ENCODE measurements at regions of chr5 and their contacts with region 1.

Region 1: GRCh38 chr5:179858586-179859427 is at the start of gene MRNIP:
- DNase-seq: peak; percentile 98
- H3K4me3 Mint-ChIP-seq: peak within 1 kb of the TSS; percentile 94
- H3K27ac Mint-ChIP-seq: peak within 1 kb of the TSS; percentile 83
- H3K4me1 Mint-ChIP-seq: peaks cover 11% of the 10 kb centered on the region
- H3K27me3 Mint-ChIP-seq: no peaks in the 10 kb centered on the region
- CTCF ChIP-seq: no peak
- total RNA-seq, gene MRNIP: 40.3 and 42.8 TPM in 2 replicates

Region 2: DNA sequence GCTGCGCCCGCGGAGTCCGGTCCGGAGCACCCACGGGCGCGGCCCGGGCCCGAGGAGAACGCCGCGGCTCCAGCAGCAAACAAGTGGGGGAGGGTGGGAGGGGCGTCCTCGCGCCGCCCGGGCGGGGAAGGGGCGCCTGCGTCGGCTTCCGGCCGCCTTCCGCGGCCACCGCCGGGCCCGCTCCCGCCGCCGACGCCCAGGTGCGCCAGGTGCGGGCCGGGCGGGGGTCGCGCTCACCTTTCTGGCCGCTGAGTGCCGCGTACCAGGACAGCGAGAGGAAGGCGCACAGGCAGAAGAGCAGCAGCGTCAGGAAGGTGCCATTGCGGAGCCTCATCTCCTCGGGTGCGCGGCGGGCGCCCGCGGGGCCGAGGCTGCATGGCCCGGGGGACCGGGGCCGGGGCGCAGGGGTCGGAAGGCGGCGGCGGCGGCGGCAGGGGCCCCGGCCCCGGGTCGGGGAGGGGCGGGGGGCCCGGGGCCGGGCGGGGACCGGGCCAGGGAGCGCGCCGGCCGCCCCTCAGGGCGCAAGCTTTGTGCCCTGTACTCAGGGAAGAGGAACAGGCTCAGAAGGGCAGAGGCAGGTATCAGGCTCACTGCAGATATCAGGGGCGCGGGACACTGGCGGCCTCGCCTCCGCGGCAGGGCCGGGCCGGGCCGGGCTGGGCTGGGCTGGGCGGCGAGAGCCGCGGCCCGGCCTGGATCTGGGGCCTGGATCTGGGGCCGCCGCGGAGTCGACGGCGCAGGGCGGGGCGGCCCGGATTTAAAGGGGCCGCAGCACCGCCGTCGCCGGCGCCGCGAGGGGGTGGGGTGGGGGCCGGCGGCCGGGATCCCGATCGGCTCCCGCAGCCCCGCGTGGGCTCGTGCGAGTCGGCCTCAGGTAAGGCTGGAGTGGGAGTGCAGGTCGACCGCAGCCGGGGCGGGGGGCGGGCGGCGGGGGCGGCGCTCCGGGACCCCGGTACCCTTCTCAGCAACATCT is 52.3 kb before region 1 on chr5 and contains the start of gene MGAT4B:
- CTCF ChIA-PET with region 1: no interaction called
- POLR2A ChIA-PET with region 1: interaction called, 8 read pairs
- intact Hi-C with region 1: loop called (anchors 5 kb)
- DNase-seq: peak; percentile 87
- H3K4me3 Mint-ChIP-seq: peak within 1 kb of the TSS; percentile 82
- H3K27ac Mint-ChIP-seq: peak within 1 kb of the TSS; percentile 92
- H3K4me1 Mint-ChIP-seq: peaks cover 29% of the 10 kb centered on the region
- H3K27me3 Mint-ChIP-seq: no peaks in the 10 kb centered on the region
- CTCF ChIP-seq: no peak
- total RNA-seq, gene MGAT4B: 153 and 198 TPM in 2 replicates

Region 3: GRCh38 chr5:179870402-179870903 is 11.6 kb after region 1 on chr5:
- CTCF ChIA-PET with region 1: interaction called, 6 read pairs
- POLR2A ChIA-PET with region 1: interaction called, 18 read pairs
- intact Hi-C with region 1: no loop called
- DNase-seq: peak; percentile 65
- H3K4me3 Mint-ChIP-seq: no peak overlapping the region
- H3K27ac Mint-ChIP-seq: no peak overlapping the region
- H3K4me1 Mint-ChIP-seq: peaks cover under 1% of the 10 kb centered on the region
- H3K27me3 Mint-ChIP-seq: no peaks in the 10 kb centered on the region
- CTCF ChIP-seq: peak; percentile 39

Measured in MCF 10A (cell line).